Naive thymus-derived CD8-positive, alpha-beta T cell (primary cell): ENCODE measurements at regions of chr11 and their contacts with region 1.

Region 1: DNA sequence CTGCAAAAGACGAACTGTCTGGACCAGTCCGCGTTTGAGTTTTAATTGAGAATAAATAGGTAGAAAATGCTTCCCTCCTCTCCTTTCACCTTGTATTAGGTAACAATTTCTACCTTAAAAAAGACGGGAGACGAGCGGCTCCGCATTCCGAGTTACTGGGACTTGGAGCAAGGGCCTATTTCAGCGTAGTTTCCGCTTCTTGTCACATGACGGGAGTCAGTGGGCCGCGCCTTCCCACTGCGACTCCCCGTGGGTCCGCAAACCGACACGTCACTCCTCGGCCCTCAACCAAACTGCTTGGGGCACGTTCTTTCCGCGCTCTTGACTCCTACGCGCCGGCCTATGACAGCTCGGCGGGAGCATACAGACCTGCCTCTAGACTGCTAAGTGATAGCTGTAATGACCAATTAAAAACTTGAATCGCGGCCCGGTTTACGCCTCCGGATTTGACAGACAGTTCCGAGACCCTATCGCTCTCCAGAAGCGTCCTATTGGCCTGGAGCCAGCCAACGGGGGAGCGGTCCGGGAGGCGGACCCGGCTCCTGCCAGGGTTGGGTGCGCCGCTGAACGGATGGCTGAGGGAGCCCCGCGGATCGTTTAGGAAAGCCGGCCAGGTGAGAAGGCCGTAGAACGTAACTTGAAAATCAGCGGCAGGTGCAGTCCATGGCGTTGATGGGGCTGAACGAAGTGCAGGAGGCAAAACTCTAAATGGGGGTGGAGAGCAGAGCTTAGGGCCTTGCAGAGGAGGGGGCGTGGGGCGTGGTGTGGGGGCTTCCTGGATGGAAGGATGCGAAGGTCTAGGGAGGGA is at the start of gene STT3A:
- DNase-seq: peak; percentile 91 to 100 (median 98)
- ATAC-seq: peak; percentile 94 to 95
- H3K4me3 Mint-ChIP-seq: peak within 1 kb of the TSS; percentile 85 to 98 (median 95)
- H3K27ac Mint-ChIP-seq: peak within 1 kb of the TSS; percentile 97 to 100 (median 98)
- H3K4me1 Mint-ChIP-seq: peaks cover 29 to 56% (median 50%) of the 10 kb centered on the region in 4 donors
- H3K27me3 Mint-ChIP-seq: no peaks in the 10 kb centered on the region
- polyA plus RNA-seq, gene STT3A: 36.8 to 53.4 (median 40.1) TPM

Region 2: GRCh38 chr11:125505492-125506080 is 86.9 kb before region 1 on chr11:
- POLR2A ChIA-PET with region 1: no interaction called
- DNase-seq: no peak
- ATAC-seq: no peak
- H3K4me3 Mint-ChIP-seq: no peak overlapping the region
- H3K27ac Mint-ChIP-seq: no peak overlapping the region
- H3K4me1 Mint-ChIP-seq: peaks cover 7 to 17% (median 12%) of the 10 kb centered on the region in 4 donors
- H3K27me3 Mint-ChIP-seq: peaks cover 0 to 3% (median 1%) of the 10 kb centered on the region in 5 donors

Region 3: GRCh38 chr11:125568970-125569914 is 23.3 kb before region 1 on chr11 and contains the start of gene EI24:
- POLR2A ChIA-PET with region 1: interaction called, 59 read pairs
- DNase-seq: peak; percentile 78 to 89 (median 81)
- ATAC-seq: peak; percentile 93 to 96
- H3K4me3 Mint-ChIP-seq: peak within 1 kb of the TSS; percentile 88 to 95 (median 92)
- H3K27ac Mint-ChIP-seq: peak within 1 kb of the TSS; percentile 83 to 97 (median 94)
- H3K4me1 Mint-ChIP-seq: peaks cover 12 to 46% (median 42%) of the 10 kb centered on the region in 4 donors
- H3K27me3 Mint-ChIP-seq: no peaks in the 10 kb centered on the region
- polyA plus RNA-seq, gene EI24: 56.0 to 84.4 (median 74.0) TPM

Region 4: GRCh38 chr11:125625630-125626287 is 33.2 kb after region 1 on chr11:
- POLR2A ChIA-PET with region 1: interaction called, 32 read pairs
- DNase-seq: peak; percentile 62 to 89 (median 78)
- ATAC-seq: peak; percentile 93 to 96
- H3K4me3 Mint-ChIP-seq: peak overlapping the region; percentile 92 to 100 (median 96)
- H3K27ac Mint-ChIP-seq: peak overlapping the region; percentile 84 to 99 (median 98)
- H3K4me1 Mint-ChIP-seq: peaks cover 8 to 21% (median 18%) of the 10 kb centered on the region in 4 donors
- H3K27me3 Mint-ChIP-seq: peaks cover 0 to 4% (median 0%) of the 10 kb centered on the region in 5 donors

Region 5: GRCh38 chr11:125887373-125888324 is 295.1 kb after region 1 on chr11 and contains the start of gene HYLS1:
- POLR2A ChIA-PET with region 1: interaction called, 13 read pairs
- DNase-seq: peak; percentile 87 to 99 (median 94)
- ATAC-seq: peak; percentile 90 to 91
- H3K4me3 Mint-ChIP-seq: peak within 1 kb of the TSS; percentile 86 to 97 (median 95)
- H3K27ac Mint-ChIP-seq: peak within 1 kb of the TSS; percentile 92 to 98 (median 96)
- H3K4me1 Mint-ChIP-seq: peaks cover 15 to 34% (median 28%) of the 10 kb centered on the region in 4 donors
- H3K27me3 Mint-ChIP-seq: peaks cover 0 to 3% (median 0%) of the 10 kb centered on the region in 5 donors
- polyA plus RNA-seq, gene HYLS1: 4.1 to 7.5 (median 4.4) TPM